Activated CD4-positive, alpha-beta T cell treated with anti-CD3 and anti-CD28 coated beads for 36 hours (primary cell): ENCODE measurements at regions of chr5 and their contacts with region 1.

Region 1: GRCh38 chr5:157603333-157604190 is 28.0 kb upstream of the ADAM19 start:
- DNase-seq: peak; percentile 78
- ATAC-seq: peak; percentile 44
- H3K4me3 Mint-ChIP-seq: peak overlapping the region; percentile 49
- H3K27ac Mint-ChIP-seq: peak overlapping the region; percentile 79
- H3K4me1 Mint-ChIP-seq: peaks cover 88% of the 10 kb centered on the region
- H3K27me3 Mint-ChIP-seq: no peaks in the 10 kb centered on the region

Region 2: DNA sequence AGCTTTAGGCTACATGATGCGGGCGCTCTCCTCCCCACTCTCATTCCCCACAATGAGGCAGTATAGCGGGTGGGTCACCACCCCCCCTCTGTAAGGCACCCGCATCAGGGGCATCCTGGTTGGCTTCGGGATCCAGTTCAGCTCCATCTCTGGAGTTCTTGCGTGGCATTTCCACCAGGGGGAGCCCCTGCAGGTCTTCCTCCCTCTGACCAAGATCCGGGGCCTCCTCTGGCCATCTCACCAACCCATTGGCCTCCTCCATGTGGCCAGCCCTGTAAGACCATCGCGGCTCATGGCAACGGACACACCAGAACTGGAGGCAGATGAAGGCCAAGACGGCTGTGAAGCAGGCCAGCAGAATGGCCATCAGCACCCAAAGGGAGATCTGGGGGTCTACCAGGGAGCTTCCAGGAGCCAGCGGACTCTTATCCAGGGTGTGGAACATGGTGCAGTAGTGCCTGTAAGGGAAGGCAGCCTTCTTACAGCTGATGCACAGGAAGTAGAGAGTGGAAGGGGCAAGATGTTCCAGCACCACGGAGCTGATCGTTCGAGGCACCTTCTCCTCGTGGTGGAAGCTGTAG is 260.6 kb before region 1 on chr5:
- CTCF ChIA-PET with region 1: no interaction called
- POLR2A ChIA-PET with region 1: no interaction called
- intact Hi-C with region 1: no loop called
- DNase-seq: peak; percentile 62
- ATAC-seq: peak; percentile 23
- H3K4me3 Mint-ChIP-seq: no peak overlapping the region
- H3K27ac Mint-ChIP-seq: peak overlapping the region; percentile 80
- H3K4me1 Mint-ChIP-seq: peaks cover 40% of the 10 kb centered on the region
- H3K27me3 Mint-ChIP-seq: no peaks in the 10 kb centered on the region

Region 3: GRCh38 chr5:157354800-157355199 is 248.8 kb before region 1 on chr5:
- CTCF ChIA-PET with region 1: no interaction called
- POLR2A ChIA-PET with region 1: no interaction called
- intact Hi-C with region 1: loop called (anchors 2 to 5 kb)
- DNase-seq: no peak
- ATAC-seq: no peak
- H3K4me3 Mint-ChIP-seq: no peak overlapping the region
- H3K27ac Mint-ChIP-seq: peak overlapping the region; percentile 22
- H3K4me1 Mint-ChIP-seq: peaks cover 53% of the 10 kb centered on the region
- H3K27me3 Mint-ChIP-seq: no peaks in the 10 kb centered on the region

Region 4: DNA sequence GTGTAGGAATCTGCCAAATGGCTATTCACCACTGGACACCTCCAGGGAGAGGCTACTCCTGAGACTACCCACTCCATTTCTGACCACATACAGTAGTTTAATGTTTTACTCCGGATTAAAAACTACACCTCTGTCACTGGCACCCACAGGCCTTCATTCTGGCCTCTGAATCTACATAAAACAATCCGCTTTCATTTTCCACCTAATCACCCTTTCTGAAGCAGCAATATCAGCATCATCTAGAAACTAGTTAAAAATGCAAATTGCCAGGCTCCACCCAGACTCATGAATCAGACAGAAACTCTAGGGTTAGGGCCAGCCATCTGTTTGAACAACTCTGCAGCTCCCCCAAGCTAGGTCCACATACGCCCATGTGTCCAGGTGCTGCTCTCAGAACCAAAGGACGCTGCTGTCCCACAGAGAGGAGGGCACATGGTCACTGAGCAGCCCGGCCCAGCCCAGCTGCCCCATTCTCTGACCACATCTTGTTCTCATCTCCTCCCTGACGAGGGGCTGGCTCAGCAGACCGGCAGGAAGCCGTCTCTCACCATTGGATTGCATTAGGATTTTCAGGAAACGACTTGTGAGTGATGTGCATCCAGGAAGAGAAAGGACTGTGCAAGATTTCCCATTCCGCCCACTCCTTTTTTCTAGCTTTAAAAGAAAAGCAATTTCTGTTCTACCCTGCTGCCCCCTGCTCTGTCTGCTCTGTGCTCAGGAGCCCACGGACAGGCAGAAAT is 62.7 kb before region 1 on chr5:
- CTCF ChIA-PET with region 1: no interaction called
- POLR2A ChIA-PET with region 1: interaction called, 4 read pairs
- intact Hi-C with region 1: loop called (anchors 2 kb)
- DNase-seq: peak; percentile 68
- ATAC-seq: peak; percentile 85
- H3K4me3 Mint-ChIP-seq: peak overlapping the region; percentile 21
- H3K27ac Mint-ChIP-seq: peak overlapping the region; percentile 79
- H3K4me1 Mint-ChIP-seq: peaks cover 73% of the 10 kb centered on the region
- H3K27me3 Mint-ChIP-seq: no peaks in the 10 kb centered on the region

Region 5: GRCh38 chr5:157582731-157583620 is 20.6 kb before region 1 on chr5:
- CTCF ChIA-PET with region 1: interaction called, 4 read pairs
- POLR2A ChIA-PET with region 1: no interaction called
- intact Hi-C with region 1: loop called in 1 of 2 experiments (anchors 2 kb)
- DNase-seq: peak; percentile 31
- ATAC-seq: peak; percentile 89
- H3K4me3 Mint-ChIP-seq: no peak overlapping the region
- H3K27ac Mint-ChIP-seq: peak overlapping the region; percentile 73
- H3K4me1 Mint-ChIP-seq: peaks cover 43% of the 10 kb centered on the region
- H3K27me3 Mint-ChIP-seq: no peaks in the 10 kb centered on the region

Region 6: DNA sequence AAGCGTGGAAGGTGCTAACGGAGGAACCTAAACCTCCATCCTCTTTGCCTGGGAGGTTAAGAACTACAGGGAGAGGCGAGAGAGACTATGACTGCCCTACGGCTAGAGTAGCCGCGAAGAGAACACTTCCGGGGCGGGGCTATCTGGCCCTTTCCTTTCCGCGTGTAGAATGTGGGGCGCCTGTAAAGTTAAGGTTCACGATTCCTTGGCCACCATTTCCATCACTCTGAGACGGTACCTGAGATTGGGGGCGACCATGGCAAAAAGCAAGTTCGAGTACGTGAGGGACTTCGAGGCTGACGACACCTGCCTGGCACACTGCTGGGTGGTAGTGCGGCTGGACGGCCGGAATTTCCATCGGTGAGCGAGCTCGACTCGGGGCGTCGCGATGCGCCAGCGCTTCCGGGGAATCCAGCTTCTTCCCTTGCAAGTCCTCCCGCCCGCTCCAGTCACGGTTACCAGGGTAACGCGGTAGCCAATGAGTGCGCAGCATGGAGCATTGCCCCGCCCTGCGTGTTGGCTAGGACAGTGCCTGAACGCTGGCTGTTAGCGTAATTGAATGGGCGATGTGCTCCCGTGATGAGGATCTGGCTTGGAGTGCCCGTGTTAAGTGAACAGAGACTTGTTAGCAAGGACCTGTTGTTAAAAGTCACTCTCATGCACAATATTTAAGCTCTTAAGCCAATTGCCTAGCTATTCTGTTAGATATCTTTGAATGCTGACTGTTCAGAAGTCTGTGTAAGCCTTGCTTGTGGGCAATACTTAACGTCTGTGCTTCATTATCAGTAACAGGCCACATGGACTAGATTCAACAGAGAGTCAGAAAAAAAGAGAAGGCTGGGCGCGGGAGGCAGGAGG is 127.9 kb after region 1 on chr5 and contains the start of gene THG1L:
- CTCF ChIA-PET with region 1: interaction called, 3 read pairs
- POLR2A ChIA-PET with region 1: interaction called, 7 read pairs
- intact Hi-C with region 1: loop called (anchors 1 to 5 kb)
- DNase-seq: peak; percentile 99
- ATAC-seq: peak; percentile 95
- H3K4me3 Mint-ChIP-seq: peak within 1 kb of the TSS; percentile 86
- H3K27ac Mint-ChIP-seq: peak within 1 kb of the TSS; percentile 96
- H3K4me1 Mint-ChIP-seq: peaks cover 27% of the 10 kb centered on the region
- H3K27me3 Mint-ChIP-seq: no peaks in the 10 kb centered on the region
- total RNA-seq, gene THG1L: 29.9 to 33.8 TPM

Region 7: GRCh38 chr5:159262859-159263567 is 1659.5 kb after region 1 on chr5 and contains the start of gene UBLCP1:
- CTCF ChIA-PET with region 1: no interaction called
- POLR2A ChIA-PET with region 1: no interaction called
- intact Hi-C with region 1: loop called in 1 of 2 experiments (anchors 10 kb)
- DNase-seq: peak; percentile 85
- ATAC-seq: peak; percentile 92
- H3K4me3 Mint-ChIP-seq: peak within 1 kb of the TSS; percentile 89
- H3K27ac Mint-ChIP-seq: peak within 1 kb of the TSS; percentile 100
- H3K4me1 Mint-ChIP-seq: peaks cover 49% of the 10 kb centered on the region
- H3K27me3 Mint-ChIP-seq: no peaks in the 10 kb centered on the region
- total RNA-seq, gene UBLCP1: 26.0 to 31.0 TPM